IMR-90 (cell line): ENCODE measurements at regions of chr11 and their contacts with region 1.

Region 1: DNA sequence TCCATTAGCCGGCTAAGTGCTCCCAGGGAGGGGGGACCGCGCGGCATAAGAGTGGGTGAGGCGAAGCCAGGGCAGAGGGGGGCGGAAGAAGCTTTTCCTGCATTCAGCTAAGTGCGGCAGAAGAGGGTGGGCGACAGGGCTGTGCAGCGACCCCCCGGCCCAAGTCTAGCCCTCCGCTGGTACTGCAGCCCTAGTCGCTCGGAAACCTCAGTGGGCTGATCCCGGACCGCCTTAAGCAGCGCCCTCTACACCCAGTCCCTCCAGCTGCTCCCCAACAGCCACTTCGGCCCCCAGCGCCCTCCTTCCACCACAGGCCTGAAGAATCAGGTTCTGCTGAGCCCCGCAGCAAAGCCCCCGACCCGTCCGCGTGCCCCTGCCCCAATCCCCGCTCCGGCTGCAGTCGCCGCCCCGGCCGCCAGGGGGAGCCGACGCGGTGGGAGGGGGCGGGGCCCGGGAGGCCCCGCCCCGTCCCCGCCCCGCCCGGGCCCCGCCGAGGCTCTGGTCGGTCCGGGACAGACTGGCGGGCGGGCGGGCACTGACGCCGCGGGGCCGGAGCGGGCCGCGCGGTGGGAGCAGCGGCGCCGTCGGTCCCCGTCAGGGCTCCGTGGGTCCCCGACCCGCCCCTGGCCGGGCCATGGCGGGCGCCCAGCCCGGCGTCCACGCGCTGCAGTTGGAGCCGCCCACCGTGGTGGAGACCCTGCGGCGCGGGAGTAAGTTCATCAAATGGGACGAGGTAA is at the start of gene PLCB3:
- DNase-seq: no peak
- ATAC-seq: peak; percentile 66
- H3K4me3 ChIP-seq: peak within 1 kb of the TSS; percentile 98
- H3K27ac ChIP-seq: peak within 1 kb of the TSS; percentile 88
- H3K4me1 ChIP-seq: peaks cover 10% of the 10 kb centered on the region
- H3K27me3 ChIP-seq: no peaks in the 10 kb centered on the region
- CTCF ChIP-seq: peak; percentile 72
- POLR2A ChIP-seq: peak; percentile 46; the same call in 1 of the 2 replicates
- RAD21 ChIP-seq: no peak
- total RNA-seq, gene PLCB3: 24.9 and 26.9 TPM in 2 replicates

Region 2: DNA sequence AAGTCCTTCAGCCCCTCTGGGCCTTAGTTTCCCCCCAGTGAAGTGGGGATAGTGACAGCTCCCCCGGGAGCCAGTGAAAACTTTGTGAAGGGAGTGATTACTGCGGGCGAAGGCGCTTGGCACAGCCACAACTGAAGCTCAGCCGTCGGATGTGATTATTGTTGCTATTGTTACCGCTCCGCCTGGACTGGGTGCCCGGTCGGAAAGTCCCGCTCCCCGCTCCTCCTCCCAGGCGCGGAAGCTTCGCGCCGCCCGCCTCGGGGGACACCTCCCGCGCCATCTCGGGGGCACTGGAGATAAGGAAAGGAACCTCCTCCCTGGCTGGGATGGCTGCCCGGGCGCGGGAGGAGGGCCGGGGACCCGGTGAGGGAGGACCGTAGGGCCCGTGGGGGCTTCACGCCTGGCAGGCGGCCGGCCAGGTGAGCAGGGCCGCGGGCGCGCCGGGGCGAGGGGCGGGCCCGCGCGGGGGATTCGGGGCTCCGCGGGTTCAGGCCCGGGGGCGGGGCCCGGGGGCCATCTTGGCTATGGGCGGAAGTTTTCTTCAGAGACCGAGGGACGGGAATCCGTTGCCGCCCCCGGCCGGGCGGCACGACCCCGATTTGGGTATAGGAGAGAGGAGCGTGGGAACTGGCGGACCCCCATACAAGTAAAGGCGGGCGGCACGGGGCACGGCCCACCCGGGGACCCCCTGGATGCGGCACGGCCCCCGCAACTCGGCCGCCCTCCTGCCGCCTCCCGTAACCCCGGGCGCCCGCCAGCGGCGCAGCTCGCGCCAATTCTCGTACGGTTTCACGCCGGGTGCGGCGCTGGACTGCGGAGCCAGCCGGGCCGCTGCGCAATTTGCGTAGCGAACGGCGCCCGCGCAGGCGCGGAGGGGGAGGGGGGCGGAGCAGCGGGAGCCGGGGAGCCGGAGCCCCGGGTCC is 34.0 kb after region 1 on chr11 and contains the start of gene GPR137:
- CTCF ChIA-PET with region 1: no interaction called
- POLR2A ChIA-PET with region 1: no interaction called
- dilution Hi-C with region 1: no loop called
- in situ Hi-C with region 1: no loop called
- intact Hi-C with region 1: loop called (anchors 1 kb)
- DNase-seq: peak; percentile 56
- ATAC-seq: peak; percentile 73
- H3K4me3 ChIP-seq: peak within 1 kb of the TSS; percentile 71
- H3K27ac ChIP-seq: peak within 1 kb of the TSS; percentile 86
- H3K4me1 ChIP-seq: peaks cover 8% of the 10 kb centered on the region
- H3K27me3 ChIP-seq: peaks cover 2% of the 10 kb centered on the region; the same call in 1 of the 2 replicates
- CTCF ChIP-seq: no peak
- POLR2A ChIP-seq: no peak; the same call in 1 of the 2 replicates
- RAD21 ChIP-seq: no peak
- total RNA-seq, gene GPR137: 2.8 and 3.6 TPM in 2 replicates